WTC11 (cell line): ENCODE measurements at regions of chr11 and their contacts with region 1.

Region 1: GRCh38 chr11:102666331-102666957 is 39.1 kb downstream of the MMP27 start:
- DNase-seq: no peak
- ATAC-seq: peak; percentile 74
- H3K4me3 Mint-ChIP-seq: no peak overlapping the region
- H3K27ac Mint-ChIP-seq: no peak overlapping the region
- H3K4me1 Mint-ChIP-seq: peaks cover 14% of the 10 kb centered on the region
- H3K27me3 Mint-ChIP-seq: no peaks in the 10 kb centered on the region
- CTCF ChIP-seq: peak; percentile 54

Region 2: DNA sequence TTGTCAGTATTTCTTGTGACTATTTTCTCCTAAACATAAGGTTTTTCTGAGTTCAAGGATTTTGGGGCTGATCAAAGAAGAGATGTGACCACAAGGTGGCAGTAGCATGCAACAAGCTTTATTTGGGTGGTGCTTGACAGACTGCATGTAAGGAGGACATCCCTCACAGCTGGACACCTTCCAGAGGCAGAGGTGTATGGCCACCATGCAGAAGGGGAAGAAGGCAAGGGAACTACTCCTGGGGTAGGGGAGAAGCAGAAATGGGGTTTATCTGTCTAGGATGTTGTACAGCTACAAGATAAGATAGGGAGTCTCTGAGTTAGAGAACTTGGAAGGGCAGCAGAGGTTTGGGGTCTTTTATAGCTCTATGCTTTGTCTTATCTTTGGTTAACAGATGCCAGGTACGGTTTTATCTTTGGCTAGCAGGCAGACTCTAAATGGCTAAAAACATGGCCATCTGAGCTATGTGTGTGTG is 324.6 kb before region 1 on chr11:
- CTCF ChIA-PET with region 1: interaction called, 30 read pairs
- POLR2A ChIA-PET with region 1: no interaction called
- DNase-seq: peak; percentile 79
- ATAC-seq: peak; percentile 92
- H3K4me3 Mint-ChIP-seq: no peak overlapping the region
- H3K27ac Mint-ChIP-seq: no peak overlapping the region
- H3K4me1 Mint-ChIP-seq: peaks cover 14% of the 10 kb centered on the region
- H3K27me3 Mint-ChIP-seq: no peaks in the 10 kb centered on the region
- CTCF ChIP-seq: peak; percentile 66

Region 3: GRCh38 chr11:102485095-102485722 is 181.2 kb before region 1 on chr11:
- CTCF ChIA-PET with region 1: interaction called, 11 read pairs
- POLR2A ChIA-PET with region 1: no interaction called
- DNase-seq: no peak
- ATAC-seq: no peak
- H3K4me3 Mint-ChIP-seq: no peak overlapping the region
- H3K27ac Mint-ChIP-seq: no peak overlapping the region
- H3K4me1 Mint-ChIP-seq: peaks cover 3% of the 10 kb centered on the region; the same call in 1 of the 2 replicates
- H3K27me3 Mint-ChIP-seq: no peaks in the 10 kb centered on the region
- CTCF ChIP-seq: no peak

Region 4: GRCh38 chr11:102523887-102524286 is 142.6 kb before region 1 on chr11:
- CTCF ChIA-PET with region 1: interaction called, 11 read pairs
- POLR2A ChIA-PET with region 1: no interaction called
- DNase-seq: no peak
- ATAC-seq: no peak; the same call in 1 of the 2 replicates
- H3K4me3 Mint-ChIP-seq: no peak overlapping the region
- H3K27ac Mint-ChIP-seq: no peak overlapping the region
- H3K4me1 Mint-ChIP-seq: 0 out of 2 replicates have a peak, but pooled peaks cover 3% of the 10 kb centered on the region
- H3K27me3 Mint-ChIP-seq: peaks cover 4% of the 10 kb centered on the region
- CTCF ChIP-seq: no peak

Region 5: DNA sequence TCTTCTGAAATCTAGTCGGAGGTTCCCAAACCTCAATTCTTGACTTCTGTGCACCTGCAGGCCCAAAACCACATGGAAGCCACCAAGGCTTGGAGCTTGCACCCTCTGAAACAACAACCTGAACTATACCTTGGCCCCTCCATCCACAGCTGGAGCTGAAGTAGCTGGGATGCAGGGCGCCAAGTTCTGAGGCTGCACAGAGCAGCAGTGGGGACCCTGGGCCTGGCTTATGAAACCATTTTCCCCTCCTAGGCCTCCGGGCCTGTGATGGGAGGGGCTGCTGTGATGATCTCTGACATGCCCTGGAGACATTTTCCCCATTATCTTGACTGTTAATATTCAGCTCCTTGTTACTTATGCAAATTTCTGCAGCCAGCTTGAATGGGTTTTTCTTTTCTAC is 97.6 kb before region 1 on chr11:
- CTCF ChIA-PET with region 1: no interaction called
- POLR2A ChIA-PET with region 1: no interaction called
- DNase-seq: no peak
- ATAC-seq: no peak
- H3K4me3 Mint-ChIP-seq: no peak overlapping the region
- H3K27ac Mint-ChIP-seq: no peak overlapping the region
- H3K4me1 Mint-ChIP-seq: no peaks in the 10 kb centered on the region
- H3K27me3 Mint-ChIP-seq: peaks cover 3% of the 10 kb centered on the region; the same call in 1 of the 2 replicates
- CTCF ChIP-seq: no peak

Region 6: GRCh38 chr11:102614485-102614884 is 52.0 kb before region 1 on chr11:
- CTCF ChIA-PET with region 1: interaction called, 78 read pairs
- POLR2A ChIA-PET with region 1: interaction called, 4 read pairs
- DNase-seq: no peak
- ATAC-seq: no peak
- H3K4me3 Mint-ChIP-seq: no peak overlapping the region
- H3K27ac Mint-ChIP-seq: no peak overlapping the region
- H3K4me1 Mint-ChIP-seq: peaks cover 40% of the 10 kb centered on the region
- H3K27me3 Mint-ChIP-seq: no peaks in the 10 kb centered on the region
- CTCF ChIP-seq: no peak

Region 7: DNA sequence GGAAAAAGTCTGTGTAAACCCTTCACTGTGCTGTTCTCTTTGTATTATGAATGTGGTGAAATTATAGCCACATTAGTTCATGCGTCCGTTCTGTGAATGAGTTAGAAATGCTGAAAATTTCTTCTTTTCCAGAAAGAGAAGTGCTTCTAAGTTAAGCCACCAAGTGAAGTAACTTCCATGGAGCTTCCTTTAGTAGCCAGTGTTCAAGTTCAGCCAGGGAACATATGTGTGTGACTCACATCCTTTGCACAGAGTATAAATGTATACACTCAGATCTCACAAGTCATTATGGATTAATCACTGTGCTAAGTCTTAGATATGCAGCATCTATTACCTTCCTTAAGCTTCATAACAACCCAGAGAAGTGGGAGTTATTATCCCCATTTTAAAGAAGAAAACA is 61.4 kb after region 1 on chr11:
- CTCF ChIA-PET with region 1: no interaction called
- POLR2A ChIA-PET with region 1: no interaction called
- DNase-seq: no peak
- ATAC-seq: no peak
- H3K4me3 Mint-ChIP-seq: no peak overlapping the region
- H3K27ac Mint-ChIP-seq: no peak overlapping the region
- H3K4me1 Mint-ChIP-seq: no peaks in the 10 kb centered on the region
- H3K27me3 Mint-ChIP-seq: no peaks in the 10 kb centered on the region
- CTCF ChIP-seq: no peak